AG04449 (cell line): ENCODE measurements at regions of chr17 and their contacts with region 1.

Region 1: GRCh38 chr17:17613708-17614114 is 22.2 kb upstream of the PEMT start:
- DNase-seq: no peak
- H3K4me3 ChIP-seq: no peak overlapping the region
- CTCF ChIP-seq: peak; percentile 67

Region 2: GRCh38 chr17:17591355-17592298 is 22.1 kb before region 1 on chr17 and contains the start of gene PEMT:
- CTCF ChIA-PET with region 1: interaction called, 16 read pairs
- POLR2A ChIA-PET with region 1: no interaction called
- DNase-seq: peak; percentile 94
- H3K4me3 ChIP-seq: peak within 1 kb of the TSS; percentile 85
- CTCF ChIP-seq: no peak

Region 3: GRCh38 chr17:17599965-17600364 is 13.7 kb before region 1 on chr17:
- CTCF ChIA-PET with region 1: interaction called, 13 read pairs
- POLR2A ChIA-PET with region 1: no interaction called
- DNase-seq: no peak
- H3K4me3 ChIP-seq: no peak overlapping the region
- CTCF ChIP-seq: no peak

Region 4: DNA sequence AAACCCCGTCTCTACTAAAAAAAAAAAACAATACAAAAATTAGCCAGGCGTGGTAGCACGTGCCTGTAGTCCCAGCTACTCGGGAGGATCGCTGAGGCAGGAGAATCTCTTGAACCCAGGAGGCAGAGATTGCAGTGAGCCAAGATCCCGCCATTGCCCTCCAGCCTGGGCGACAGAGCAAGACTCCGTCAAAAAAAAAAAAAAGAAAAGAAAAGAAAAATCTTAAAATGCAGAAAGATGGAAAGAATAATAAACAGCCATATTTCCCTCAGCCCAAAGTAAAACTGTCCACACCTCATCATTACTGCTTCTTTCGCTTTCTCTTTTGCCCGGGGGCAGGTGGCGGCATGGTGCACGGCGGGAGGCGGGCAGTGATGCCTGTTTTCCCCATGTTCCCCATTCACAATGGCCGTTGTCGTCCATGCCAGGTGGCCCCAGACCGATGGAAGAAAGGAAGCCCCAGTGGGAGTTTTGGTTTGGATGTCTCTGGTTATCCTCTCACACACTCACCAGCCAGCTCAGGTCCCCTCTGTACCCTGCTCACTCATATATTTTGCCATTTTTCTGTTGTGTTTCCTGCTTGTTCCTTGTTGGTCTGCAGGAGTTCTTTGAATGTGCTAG is 14.8 kb after region 1 on chr17:
- CTCF ChIA-PET with region 1: interaction called, 13 read pairs
- POLR2A ChIA-PET with region 1: no interaction called
- DNase-seq: no peak
- H3K4me3 ChIP-seq: no peak overlapping the region; the same call in 1 of the 2 replicates
- CTCF ChIP-seq: no peak

Region 5: GRCh38 chr17:17641621-17642409 is 28.1 kb after region 1 on chr17:
- CTCF ChIA-PET with region 1: interaction called, 17 read pairs
- POLR2A ChIA-PET with region 1: no interaction called
- DNase-seq: peak; percentile 19
- H3K4me3 ChIP-seq: no peak overlapping the region
- CTCF ChIP-seq: peak; percentile 85

Region 6: GRCh38 chr17:17729620-17730249 is 116.0 kb after region 1 on chr17:
- CTCF ChIA-PET with region 1: no interaction called
- POLR2A ChIA-PET with region 1: no interaction called
- DNase-seq: no peak
- H3K4me3 ChIP-seq: no peak overlapping the region
- CTCF ChIP-seq: peak; percentile 46